Mammary epithelial cell (primary cell): ENCODE measurements at regions of chr2 and their contacts with region 1.

Region 1: DNA sequence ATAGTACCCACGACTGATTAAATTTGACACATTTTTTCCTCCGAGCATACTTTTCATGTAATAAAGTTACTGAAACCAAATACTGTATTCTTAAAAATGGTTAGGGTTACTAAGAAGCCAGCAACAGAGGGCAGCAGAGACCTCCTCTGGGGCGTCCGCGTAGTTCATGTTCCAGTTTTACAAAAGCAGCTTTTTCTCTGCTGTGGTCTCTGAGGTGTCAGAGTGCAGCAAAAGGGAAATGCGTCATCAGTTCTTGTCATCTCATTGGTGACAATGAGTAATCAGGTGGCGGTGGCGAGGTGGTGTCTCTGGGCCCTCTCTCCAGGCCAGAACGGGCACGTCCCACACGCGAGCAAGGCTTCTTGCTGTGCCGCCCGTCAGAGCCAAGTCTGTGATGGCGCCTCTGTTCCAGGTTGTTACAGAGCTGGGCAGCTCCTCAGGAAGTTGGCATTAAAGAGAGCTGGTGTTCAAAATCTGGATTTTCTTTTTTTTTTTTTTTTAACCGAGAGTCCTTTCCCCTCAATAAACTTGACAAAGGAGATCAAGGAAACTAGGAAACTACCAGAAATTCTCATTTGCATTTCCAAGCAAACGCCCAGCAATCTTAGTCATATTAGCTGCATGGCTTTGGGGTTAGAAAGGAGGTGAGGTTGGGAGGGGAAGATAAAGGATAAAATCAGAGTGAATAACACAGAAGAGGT is 98.6 kb upstream of the BZW1 start:
- DNase-seq: peak; percentile 89
- H3K4me3 ChIP-seq: peak overlapping the region; percentile 34
- H3K27ac ChIP-seq: peak overlapping the region; percentile 59
- H3K4me1 ChIP-seq: peaks cover 9% of the 10 kb centered on the region
- H3K27me3 ChIP-seq: no peaks in the 10 kb centered on the region
- CTCF ChIP-seq: peak; percentile 84 to 91

Region 2: DNA sequence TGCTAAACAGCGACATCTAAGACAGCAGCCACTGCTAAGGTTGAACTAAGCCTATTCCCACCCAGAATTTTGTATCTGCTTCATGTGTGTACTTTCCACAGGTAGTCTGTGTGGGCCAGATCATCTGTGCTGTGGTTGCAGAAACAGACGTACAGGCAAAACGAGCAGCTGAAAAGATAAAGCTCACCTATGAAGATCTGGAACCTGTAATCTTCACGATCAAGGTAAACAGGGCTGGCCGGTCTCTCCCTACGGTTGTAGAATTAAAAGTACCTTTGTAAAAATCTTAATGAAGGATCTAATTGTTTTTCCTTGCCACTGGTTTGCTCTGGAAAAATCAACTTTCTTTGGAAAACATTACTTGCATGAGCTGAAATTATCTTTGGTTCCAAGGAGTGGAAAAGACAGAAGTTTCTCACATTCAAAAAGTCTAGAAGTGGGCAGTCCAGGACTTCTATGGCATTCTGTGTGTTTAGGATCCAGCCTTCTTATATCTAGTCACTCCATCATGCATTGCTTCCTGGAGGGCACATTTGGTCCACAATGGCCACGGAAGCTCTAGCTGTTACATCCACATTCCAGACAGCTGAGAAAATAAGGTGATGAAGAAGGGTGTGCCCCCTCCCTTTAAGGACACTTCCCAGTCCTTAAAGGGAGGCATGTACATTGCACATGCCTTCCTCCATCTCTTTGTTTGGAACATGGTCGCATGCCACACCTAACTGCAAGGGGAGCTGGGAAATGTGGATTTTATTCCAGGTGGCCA is 38.4 kb after region 1 on chr2:
- CTCF ChIA-PET with region 1: no interaction called
- dilution Hi-C with region 1: no loop called
- in situ Hi-C with region 1: no loop called
- intact Hi-C with region 1: no loop called
- DNase-seq: no peak
- H3K4me3 ChIP-seq: no peak overlapping the region
- H3K27ac ChIP-seq: no peak overlapping the region
- H3K4me1 ChIP-seq: peaks cover 33% of the 10 kb centered on the region
- H3K27me3 ChIP-seq: no peaks in the 10 kb centered on the region
- CTCF ChIP-seq: no peak

Region 3: GRCh38 chr2:200765139-200765951 is 52.2 kb after region 1 on chr2:
- CTCF ChIA-PET with region 1: interaction called, 5 read pairs
- dilution Hi-C with region 1: no loop called
- in situ Hi-C with region 1: no loop called
- intact Hi-C with region 1: loop called (anchors 2 kb)
- DNase-seq: peak; percentile 94
- H3K4me3 ChIP-seq: no peak overlapping the region
- H3K27ac ChIP-seq: peak overlapping the region; percentile 83
- H3K4me1 ChIP-seq: peaks cover 59% of the 10 kb centered on the region
- H3K27me3 ChIP-seq: no peaks in the 10 kb centered on the region
- CTCF ChIP-seq: no peak

Region 4: GRCh38 chr2:200811336-200812121 is 98.4 kb after region 1 on chr2 and contains the start of gene BZW1:
- CTCF ChIA-PET with region 1: no interaction called
- dilution Hi-C with region 1: no loop called
- in situ Hi-C with region 1: loop called (anchors 5 to 10 kb)
- intact Hi-C with region 1: loop called (anchors 1 kb)
- DNase-seq: peak; percentile 95
- H3K4me3 ChIP-seq: peak within 1 kb of the TSS; percentile 46 to 96 (median 86)
- H3K27ac ChIP-seq: peak within 1 kb of the TSS; percentile 94
- H3K4me1 ChIP-seq: peaks cover 25% of the 10 kb centered on the region
- H3K27me3 ChIP-seq: no peaks in the 10 kb centered on the region
- CTCF ChIP-seq: no peak
- total RNA-seq, gene BZW1: 350 to 501 TPM

Region 5: GRCh38 chr2:200877443-200877842 is 164.3 kb after region 1 on chr2:
- CTCF ChIA-PET with region 1: interaction called, 17 read pairs
- dilution Hi-C with region 1: no loop called
- in situ Hi-C with region 1: no loop called
- intact Hi-C with region 1: no loop called
- DNase-seq: no peak
- H3K4me3 ChIP-seq: no peak overlapping the region
- H3K27ac ChIP-seq: no peak overlapping the region
- H3K4me1 ChIP-seq: no peaks in the 10 kb centered on the region
- H3K27me3 ChIP-seq: no peaks in the 10 kb centered on the region
- CTCF ChIP-seq: no peak

Region 6: GRCh38 chr2:201007561-201007998 is 294.4 kb after region 1 on chr2:
- CTCF ChIA-PET with region 1: no interaction called
- dilution Hi-C with region 1: no loop called
- in situ Hi-C with region 1: no loop called
- intact Hi-C with region 1: no loop called
- DNase-seq: no peak
- H3K4me3 ChIP-seq: no peak overlapping the region
- H3K27ac ChIP-seq: no peak overlapping the region
- H3K4me1 ChIP-seq: no peaks in the 10 kb centered on the region
- H3K27me3 ChIP-seq: no peaks in the 10 kb centered on the region
- CTCF ChIP-seq: no peak

Region 7: DNA sequence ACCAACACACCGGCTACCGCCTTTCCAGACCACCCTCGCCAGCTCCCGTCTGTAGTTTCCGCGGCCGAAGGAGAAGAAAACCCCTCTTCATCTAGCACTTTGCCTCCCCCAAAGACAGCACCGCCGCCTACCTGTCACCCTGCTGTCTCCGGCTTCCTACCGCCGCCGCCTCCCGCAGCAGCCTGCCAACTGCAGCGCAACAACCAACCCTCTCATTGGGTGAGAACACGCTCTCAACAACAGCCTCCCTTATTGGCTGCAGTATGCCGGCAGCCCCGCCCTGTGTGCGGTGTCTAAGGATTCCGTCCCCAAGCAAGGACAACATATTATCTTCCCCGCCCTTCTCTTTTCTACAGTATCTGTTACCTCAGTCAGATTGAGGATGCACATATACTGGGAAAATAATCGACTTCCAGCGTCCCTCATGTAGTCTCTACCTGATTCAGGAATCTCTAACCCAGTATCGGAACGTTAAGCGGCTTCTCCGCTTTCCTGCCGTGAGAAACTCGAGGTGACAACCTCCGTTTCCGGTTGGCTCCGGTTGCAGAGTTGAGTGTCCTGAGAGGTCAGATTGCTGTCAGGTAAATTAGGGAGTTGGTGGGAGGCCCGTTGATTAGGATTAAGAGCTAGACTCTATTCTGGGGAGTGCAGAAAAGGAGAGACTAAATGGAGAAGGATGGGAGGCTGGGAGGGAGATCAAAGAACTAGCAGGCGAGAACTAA is 358.5 kb after region 1 on chr2 and contains the starts of genes HYCC2 and NDUFB3:
- CTCF ChIA-PET with region 1: no interaction called
- dilution Hi-C with region 1: no loop called
- in situ Hi-C with region 1: no loop called
- intact Hi-C with region 1: loop called (anchors 1 kb)
- DNase-seq: peak; percentile 93
- H3K4me3 ChIP-seq: peak within 1 kb of the TSS; percentile 84 to 90 (median 87)
- H3K27ac ChIP-seq: peak within 1 kb of the TSS; percentile 93
- H3K4me1 ChIP-seq: peaks cover 12% of the 10 kb centered on the region
- H3K27me3 ChIP-seq: no peaks in the 10 kb centered on the region
- CTCF ChIP-seq: peak in 1 of 2 donors; percentile 49
- total RNA-seq, gene HYCC2: 15.0 to 15.2 TPM
- total RNA-seq, gene NDUFB3: 23.7 to 84.9 TPM